ENCODE measurements at regions of chr7 and their contacts with region 1.

Region 1: DNA sequence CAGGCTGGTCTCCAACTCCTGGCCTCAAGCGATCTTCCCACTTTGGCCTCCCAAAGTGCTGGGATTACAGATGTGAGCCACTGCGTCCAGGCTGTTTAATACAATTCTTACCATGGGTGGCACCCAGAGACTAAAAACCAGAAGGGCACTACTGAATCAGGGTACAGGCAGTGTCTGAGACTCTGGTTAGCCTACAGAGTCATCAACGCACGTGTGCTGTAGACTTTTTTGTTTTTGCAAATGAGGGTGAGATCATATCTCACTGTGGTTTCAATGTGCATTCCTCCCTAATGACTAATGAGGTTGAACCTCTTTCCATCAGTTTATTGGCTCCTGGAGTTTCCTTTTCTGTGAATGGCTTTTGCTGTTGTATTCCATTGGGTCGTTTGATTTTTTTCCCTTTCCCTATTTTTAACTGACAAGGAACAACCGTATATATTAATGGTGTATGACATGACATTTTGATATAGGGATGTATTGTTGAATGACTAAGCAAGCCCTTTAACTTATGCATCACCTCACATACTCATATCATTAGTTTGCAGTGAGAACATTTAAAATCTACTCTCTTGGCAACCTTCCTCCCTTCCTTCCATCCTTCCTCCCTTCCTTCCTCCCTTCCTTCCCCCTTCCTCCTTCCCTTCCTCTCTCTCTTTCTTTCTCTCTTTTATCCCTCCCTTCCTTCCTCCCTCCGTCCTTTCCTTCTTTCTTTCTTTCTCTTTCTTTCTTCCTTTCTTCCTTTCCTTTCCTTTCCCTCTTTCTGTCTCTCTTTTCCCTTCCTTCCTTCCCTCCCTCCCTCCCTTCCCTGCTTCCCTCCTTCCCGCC is 9.3 kb upstream of the METTL27 start:
- DNase-seq: peak; percentile 55
- H3K4me3 Mint-ChIP-seq: no peak overlapping the region
- H3K27ac Mint-ChIP-seq: peak overlapping the region; percentile 45
- H3K4me1 Mint-ChIP-seq: peaks cover 30% of the 10 kb centered on the region
- H3K27me3 Mint-ChIP-seq: peaks cover 12% of the 10 kb centered on the region

Region 2: GRCh38 chr7:72674394-72674793 is 1177.2 kb before region 1 on chr7:
- CTCF ChIA-PET with region 1: no interaction called
- POLR2A ChIA-PET with region 1: no interaction called
- intact Hi-C with region 1: no loop called
- DNase-seq: no peak
- H3K4me3 Mint-ChIP-seq: no peak overlapping the region
- H3K27ac Mint-ChIP-seq: no peak overlapping the region
- H3K4me1 Mint-ChIP-seq: peaks cover 3% of the 10 kb centered on the region
- H3K27me3 Mint-ChIP-seq: no peaks in the 10 kb centered on the region

Region 3: GRCh38 chr7:73738612-73739374 is 112.8 kb before region 1 on chr7 and contains the start of gene ABHD11:
- CTCF ChIA-PET with region 1: interaction called, 14 read pairs
- POLR2A ChIA-PET with region 1: no interaction called
- intact Hi-C with region 1: loop called (anchors 2 kb)
- DNase-seq: peak; percentile 99
- H3K4me3 Mint-ChIP-seq: peak within 1 kb of the TSS; percentile 91
- H3K27ac Mint-ChIP-seq: peak within 1 kb of the TSS; percentile 82
- H3K4me1 Mint-ChIP-seq: peaks cover 13% of the 10 kb centered on the region
- H3K27me3 Mint-ChIP-seq: no peaks in the 10 kb centered on the region
- total RNA-seq, gene ABHD11: 14.7 to 16.8 TPM

Region 4: GRCh38 chr7:73778801-73779389 is 72.7 kb before region 1 on chr7:
- CTCF ChIA-PET with region 1: no interaction called
- POLR2A ChIA-PET with region 1: no interaction called
- intact Hi-C with region 1: no loop called
- DNase-seq: no peak
- H3K4me3 Mint-ChIP-seq: no peak overlapping the region
- H3K27ac Mint-ChIP-seq: no peak overlapping the region
- H3K4me1 Mint-ChIP-seq: peaks cover 3% of the 10 kb centered on the region
- H3K27me3 Mint-ChIP-seq: peaks cover 8% of the 10 kb centered on the region

Region 5: GRCh38 chr7:73799267-73800141 is 52.1 kb before region 1 on chr7:
- CTCF ChIA-PET with region 1: no interaction called
- POLR2A ChIA-PET with region 1: no interaction called
- intact Hi-C with region 1: no loop called
- DNase-seq: no peak
- H3K4me3 Mint-ChIP-seq: no peak overlapping the region
- H3K27ac Mint-ChIP-seq: no peak overlapping the region
- H3K4me1 Mint-ChIP-seq: no peaks in the 10 kb centered on the region
- H3K27me3 Mint-ChIP-seq: peaks cover 3% of the 10 kb centered on the region

Region 6: DNA sequence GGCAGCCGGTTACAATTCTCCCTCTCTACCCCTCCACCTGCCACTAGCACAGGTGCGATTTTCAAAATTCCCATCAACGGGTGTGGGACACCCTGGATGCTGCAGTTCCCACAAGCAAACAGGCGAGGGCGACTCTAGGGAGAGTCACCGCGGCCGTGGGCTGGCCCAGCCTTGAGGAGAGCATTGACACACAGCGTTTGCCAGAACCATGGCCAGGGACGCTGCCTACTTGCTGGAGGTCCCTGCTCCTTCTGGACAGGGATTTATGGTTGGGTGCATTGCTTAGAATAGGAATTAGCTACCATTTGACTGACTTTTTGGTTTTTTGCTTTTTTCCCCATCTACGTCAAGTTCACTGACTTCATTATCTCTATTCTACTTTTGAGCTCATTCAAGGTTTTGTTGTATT is 39.9 kb before region 1 on chr7:
- CTCF ChIA-PET with region 1: interaction called, 97 read pairs
- POLR2A ChIA-PET with region 1: no interaction called
- intact Hi-C with region 1: loop called (anchors 1 kb)
- DNase-seq: peak; percentile 73
- H3K4me3 Mint-ChIP-seq: no peak overlapping the region
- H3K27ac Mint-ChIP-seq: no peak overlapping the region
- H3K4me1 Mint-ChIP-seq: no peaks in the 10 kb centered on the region
- H3K27me3 Mint-ChIP-seq: peaks cover 8% of the 10 kb centered on the region

Region 7: DNA sequence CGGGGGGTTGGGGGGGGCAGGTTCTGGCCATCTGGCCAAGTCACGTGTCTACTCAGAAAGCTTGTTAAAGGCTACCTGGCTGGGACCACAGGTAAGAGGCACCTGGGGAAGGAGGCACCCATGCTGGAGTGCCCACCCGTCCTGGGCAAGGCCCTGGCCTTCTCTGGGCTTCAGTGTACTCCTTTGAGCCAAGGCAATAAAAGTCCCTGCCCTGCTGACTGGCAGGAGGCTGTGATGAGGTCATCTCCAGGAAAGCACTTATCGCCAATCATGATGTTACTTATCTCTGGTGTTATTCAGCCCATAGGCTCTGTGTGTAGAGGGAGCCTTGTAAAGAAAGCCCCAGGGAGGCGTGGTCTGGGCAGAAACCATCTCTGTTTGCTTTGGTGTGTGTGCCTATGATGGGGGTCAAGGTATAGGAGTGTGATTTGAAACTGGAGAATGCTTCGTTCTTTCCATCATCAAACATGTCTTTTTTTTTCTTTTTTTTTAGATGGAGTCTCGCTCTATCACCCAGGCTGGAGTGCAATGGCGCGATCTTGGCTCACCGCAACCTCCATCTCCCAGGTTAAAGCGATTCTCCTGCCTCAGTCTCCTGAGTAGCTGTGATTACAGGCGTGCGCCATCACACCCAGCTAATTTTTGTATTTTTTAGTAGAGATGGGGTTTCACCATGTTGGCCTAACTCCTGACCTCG is 23.4 kb before region 1 on chr7:
- CTCF ChIA-PET with region 1: interaction called, 12 read pairs
- POLR2A ChIA-PET with region 1: no interaction called
- intact Hi-C with region 1: loop called (anchors 2 kb)
- DNase-seq: peak; percentile 47
- H3K4me3 Mint-ChIP-seq: no peak overlapping the region
- H3K27ac Mint-ChIP-seq: no peak overlapping the region
- H3K4me1 Mint-ChIP-seq: peaks cover 25% of the 10 kb centered on the region
- H3K27me3 Mint-ChIP-seq: peaks cover 1% of the 10 kb centered on the region